ENCODE measurements at regions of chr21 and their contacts with region 1.

Region 1: GRCh38 chr21:31731802-31732596 is at the start of gene SCAF4:
- DNase-seq: peak; percentile 78
- H3K4me3 Mint-ChIP-seq: no peak within 1 kb of the TSS
- H3K27ac Mint-ChIP-seq: peak within 1 kb of the TSS; percentile 79
- H3K4me1 Mint-ChIP-seq: no peaks in the 10 kb centered on the region
- H3K27me3 Mint-ChIP-seq: no peaks in the 10 kb centered on the region
- total RNA-seq, gene SCAF4: 66.1 and 70.6 TPM in 2 replicates

Region 2: GRCh38 chr21:31659536-31660258 is 72.3 kb before region 1 on chr21 and contains the start of gene SOD1:
- intact Hi-C with region 1: loop called (anchors 1 kb)
- DNase-seq: peak; percentile 96
- H3K4me3 Mint-ChIP-seq: peak within 1 kb of the TSS; percentile 99
- H3K27ac Mint-ChIP-seq: peak within 1 kb of the TSS; percentile 100
- H3K4me1 Mint-ChIP-seq: peaks cover 76% of the 10 kb centered on the region
- H3K27me3 Mint-ChIP-seq: no peaks in the 10 kb centered on the region
- total RNA-seq, gene SOD1: 346 and 354 TPM in 2 replicates

Region 3: GRCh38 chr21:31665397-31665796 is 66.6 kb before region 1 on chr21:
- intact Hi-C with region 1: loop called (anchors 2 kb)
- DNase-seq: peak; percentile 23
- H3K4me3 Mint-ChIP-seq: peak overlapping the region; percentile 41
- H3K27ac Mint-ChIP-seq: peak overlapping the region; percentile 50
- H3K4me1 Mint-ChIP-seq: peaks cover 86% of the 10 kb centered on the region
- H3K27me3 Mint-ChIP-seq: no peaks in the 10 kb centered on the region

Region 4: GRCh38 chr21:31713973-31714740 is 17.8 kb before region 1 on chr21:
- intact Hi-C with region 1: loop called (anchors 1 kb)
- DNase-seq: no peak
- H3K4me3 Mint-ChIP-seq: no peak overlapping the region
- H3K27ac Mint-ChIP-seq: peak overlapping the region; percentile 66
- H3K4me1 Mint-ChIP-seq: peaks cover 35% of the 10 kb centered on the region
- H3K27me3 Mint-ChIP-seq: no peaks in the 10 kb centered on the region

Measured in activated T-helper 1 cell treated with anti-CD3 and anti-CD28 coated beads, Interleukin-12 subunit alpha, Interleukin-12 subunit beta, Interleukin-2, Interleukin-4 antibody, amounts not matched to agents 30 ng/mL and 10 ng/mL and 1 ng/mL, durations not matched to agents 14 hours and 24 hours and 36 hours (primary cell).